ENCODE measurements at regions of chr11 and their contacts with region 1.

Region 1: GRCh38 chr11:31240338-31240904 is 129.1 kb downstream of the DCDC1 start:
- DNase-seq: peak; percentile 63
- ATAC-seq: peak; percentile 71
- H3K4me3 ChIP-seq: no peak overlapping the region
- H3K27ac ChIP-seq: no peak overlapping the region
- H3K4me1 ChIP-seq: no peaks in the 10 kb centered on the region
- H3K27me3 ChIP-seq: peaks cover 13% of the 10 kb centered on the region
- CTCF ChIP-seq: peak; percentile 75

Region 2: GRCh38 chr11:31107062-31107461 is 133.4 kb before region 1 on chr11:
- CTCF ChIA-PET with region 1: no interaction called
- POLR2A ChIA-PET with region 1: no interaction called
- intact Hi-C with region 1: loop called (anchors 2 kb)
- DNase-seq: peak; percentile 56
- ATAC-seq: peak; percentile 55
- H3K4me3 ChIP-seq: no peak overlapping the region
- H3K27ac ChIP-seq: no peak overlapping the region
- H3K4me1 ChIP-seq: no peaks in the 10 kb centered on the region
- H3K27me3 ChIP-seq: peaks cover 37% of the 10 kb centered on the region
- CTCF ChIP-seq: peak; percentile 77

Region 3: DNA sequence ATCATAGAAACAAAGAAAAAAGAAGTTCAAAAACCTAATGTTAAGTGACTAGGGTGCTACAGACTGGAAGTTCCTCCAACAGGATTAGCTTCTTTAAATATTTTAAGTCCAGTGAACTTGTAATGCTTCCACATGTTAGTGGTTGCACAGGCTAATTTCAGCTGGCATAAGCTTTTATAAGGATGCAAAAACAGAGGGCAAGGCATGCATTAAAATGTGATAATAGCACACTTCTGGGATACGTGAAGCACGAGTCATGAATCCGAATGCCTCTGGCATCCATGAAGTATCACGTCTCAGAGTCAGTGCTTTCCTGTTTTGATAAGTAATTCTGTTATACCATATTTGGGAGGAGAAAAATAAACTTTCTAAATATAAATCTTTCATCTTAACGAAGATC is 22.3 kb after region 1 on chr11:
- CTCF ChIA-PET with region 1: no interaction called
- POLR2A ChIA-PET with region 1: no interaction called
- intact Hi-C with region 1: no loop called
- DNase-seq: no peak
- ATAC-seq: no peak
- H3K4me3 ChIP-seq: no peak overlapping the region
- H3K27ac ChIP-seq: no peak overlapping the region
- H3K4me1 ChIP-seq: no peaks in the 10 kb centered on the region
- H3K27me3 ChIP-seq: peaks cover 26% of the 10 kb centered on the region; the same call in 1 of the 2 replicates
- CTCF ChIP-seq: no peak

Region 4: DNA sequence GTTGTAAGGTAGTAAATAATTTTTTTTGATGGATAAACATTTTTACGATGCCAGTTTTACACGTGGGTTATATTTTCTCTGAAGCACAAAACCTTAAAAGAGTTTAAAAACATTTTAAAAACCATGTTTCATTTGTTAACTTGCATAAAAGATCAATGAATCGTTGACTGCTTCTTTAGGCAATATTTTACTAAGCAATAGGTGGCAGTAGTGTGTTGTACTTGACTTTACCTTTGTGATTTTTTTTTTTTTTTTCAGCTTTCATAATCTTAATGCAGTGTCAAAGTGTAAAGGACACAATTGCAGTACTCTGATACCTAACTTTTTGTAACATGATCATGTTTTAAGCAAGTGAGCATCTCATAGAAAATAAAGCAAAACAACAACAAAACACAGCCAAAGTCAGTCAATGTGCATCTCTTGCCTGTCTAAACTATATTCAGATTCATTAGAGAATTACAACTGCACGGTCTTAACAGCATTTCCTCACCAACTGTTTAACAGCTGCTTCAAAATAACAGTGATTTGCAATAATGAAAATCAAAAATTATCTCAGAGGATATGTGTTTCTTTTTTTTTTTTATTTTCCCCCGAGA is 156.9 kb after region 1 on chr11:
- CTCF ChIA-PET with region 1: no interaction called
- POLR2A ChIA-PET with region 1: no interaction called
- intact Hi-C with region 1: loop called (anchors 10 kb)
- DNase-seq: peak; percentile 56
- ATAC-seq: no peak
- H3K4me3 ChIP-seq: no peak overlapping the region
- H3K27ac ChIP-seq: no peak overlapping the region
- H3K4me1 ChIP-seq: no peaks in the 10 kb centered on the region
- H3K27me3 ChIP-seq: no peaks in the 10 kb centered on the region
- CTCF ChIP-seq: peak; percentile 75

Region 5: DNA sequence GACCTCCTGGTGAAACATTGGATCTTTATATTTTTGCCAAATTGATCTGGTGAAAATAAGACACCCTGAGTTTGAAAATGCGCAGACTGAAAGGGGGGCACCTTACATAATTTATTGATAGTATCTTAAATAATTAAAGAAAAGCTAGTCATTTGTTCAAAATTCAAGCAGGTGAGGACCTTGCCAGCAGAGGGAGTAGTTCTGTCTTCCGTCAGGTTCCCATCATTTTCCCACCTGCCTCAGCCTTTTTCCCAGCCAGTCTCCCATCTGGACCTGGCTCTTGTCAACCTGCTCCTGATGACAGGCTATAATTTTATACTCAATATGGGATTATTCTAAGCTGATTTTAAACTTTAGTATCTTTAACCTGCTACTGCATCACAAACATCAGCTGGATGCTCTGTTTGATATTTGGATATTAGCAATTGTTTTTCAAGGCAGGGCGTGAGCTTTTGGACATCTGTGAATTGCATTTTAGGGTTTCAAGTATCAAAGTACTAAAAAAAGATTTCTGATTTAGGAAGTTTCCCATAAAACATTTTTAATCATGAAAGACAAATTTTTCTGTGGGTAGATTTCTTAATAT is 401.1 kb after region 1 on chr11:
- CTCF ChIA-PET with region 1: no interaction called
- POLR2A ChIA-PET with region 1: no interaction called
- intact Hi-C with region 1: loop called (anchors 10 kb)
- DNase-seq: peak; percentile 70
- ATAC-seq: no peak
- H3K4me3 ChIP-seq: no peak overlapping the region
- H3K27ac ChIP-seq: no peak overlapping the region
- H3K4me1 ChIP-seq: peaks cover 28% of the 10 kb centered on the region
- H3K27me3 ChIP-seq: no peaks in the 10 kb centered on the region
- CTCF ChIP-seq: peak; percentile 72

Region 6: DNA sequence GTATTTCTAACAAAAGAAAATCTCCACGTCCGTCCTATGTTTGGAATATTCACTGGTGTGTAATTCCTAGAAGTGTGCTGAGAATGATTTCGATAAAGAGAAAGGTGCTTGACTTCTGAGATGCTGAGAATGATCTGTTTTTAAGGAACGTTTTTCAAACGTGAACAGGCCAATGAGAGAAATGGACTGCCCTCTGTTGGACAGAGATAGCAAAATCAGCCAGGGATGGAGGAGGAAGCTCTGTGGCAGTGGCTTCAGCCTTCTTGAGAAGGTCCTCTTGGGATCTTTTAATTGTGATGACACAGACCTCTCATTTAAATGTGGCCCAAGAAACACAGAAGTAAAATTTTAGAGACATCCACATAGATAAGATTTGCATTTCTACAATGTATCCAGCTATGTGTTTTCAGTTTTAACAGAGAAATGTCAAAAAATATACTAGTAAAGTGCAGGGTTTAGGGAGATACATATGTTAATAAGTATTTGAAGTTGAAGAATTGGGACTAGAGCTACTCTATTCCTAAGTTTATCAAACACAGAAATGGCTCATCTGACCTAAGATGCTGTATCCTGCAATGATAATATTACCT is 766.5 kb after region 1 on chr11:
- CTCF ChIA-PET with region 1: interaction called, 3 read pairs
- POLR2A ChIA-PET with region 1: no interaction called
- intact Hi-C with region 1: loop called (anchors 2 kb)
- DNase-seq: peak; percentile 71
- ATAC-seq: peak; percentile 55
- H3K4me3 ChIP-seq: no peak overlapping the region
- H3K27ac ChIP-seq: no peak overlapping the region
- H3K4me1 ChIP-seq: peaks cover 15% of the 10 kb centered on the region
- H3K27me3 ChIP-seq: peaks cover 40% of the 10 kb centered on the region
- CTCF ChIP-seq: peak; percentile 79

Region 7: DNA sequence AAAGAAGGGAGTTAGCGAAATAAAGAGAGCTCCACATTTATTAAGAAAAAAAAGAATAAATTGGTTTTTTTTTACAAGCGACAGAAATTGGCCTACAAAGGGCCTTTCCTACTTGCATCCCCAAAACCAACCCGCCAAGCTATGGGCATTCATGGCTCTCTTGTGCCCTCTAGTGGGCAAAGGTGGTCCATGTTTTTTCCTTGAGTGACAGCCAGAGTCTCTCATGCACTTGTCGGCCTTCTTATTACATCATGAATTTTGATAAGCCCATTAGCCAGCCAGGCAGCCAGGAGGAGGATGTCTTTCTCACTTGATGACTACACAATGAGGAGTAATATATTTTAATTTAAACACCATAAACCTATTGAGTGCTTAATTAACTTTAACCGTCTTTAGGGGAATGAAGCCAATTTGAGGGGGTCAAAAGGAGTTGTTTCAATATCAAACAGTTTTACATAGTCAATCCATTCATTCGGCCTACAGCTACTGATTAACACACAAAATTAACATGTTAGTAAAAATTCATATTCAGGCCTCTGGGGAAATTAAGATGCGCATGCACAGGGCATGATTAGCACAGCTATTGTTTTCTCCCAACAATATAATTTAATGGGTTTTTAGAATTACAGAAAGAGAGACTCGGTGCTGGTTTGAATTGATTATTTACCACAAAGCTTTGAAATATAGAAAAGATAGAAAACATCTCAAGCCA is 936.0 kb after region 1 on chr11:
- CTCF ChIA-PET with region 1: interaction called, 3 read pairs
- POLR2A ChIA-PET with region 1: no interaction called
- intact Hi-C with region 1: loop called (anchors 1 kb)
- DNase-seq: peak; percentile 91
- ATAC-seq: peak; percentile 67
- H3K4me3 ChIP-seq: no peak overlapping the region
- H3K27ac ChIP-seq: no peak overlapping the region
- H3K4me1 ChIP-seq: no peaks in the 10 kb centered on the region
- H3K27me3 ChIP-seq: peaks cover 27% of the 10 kb centered on the region
- CTCF ChIP-seq: peak; percentile 84

Measured in PC-3 (cell line).